Common myeloid progenitor, CD34-positive (primary cell): ENCODE measurements at regions of chr19 and their contacts with region 1.

Region 1: GRCh38 chr19:41449079-41449864 is 6.3 kb downstream of the ERICH4 start:
- DNase-seq: peak; percentile 50 to 68 (median 65)
- H3K4me3 ChIP-seq: peak overlapping the region in 6 of 7 experiments; percentile 13 to 66 (median 42)
- H3K27ac ChIP-seq: no peak overlapping the region
- H3K4me1 ChIP-seq: peaks cover 3 to 13% (median 5%) of the 10 kb centered on the region in 4 experiments
- H3K27me3 ChIP-seq: peaks cover 0 to 5% (median 0%) of the 10 kb centered on the region in 5 experiments

Region 2: DNA sequence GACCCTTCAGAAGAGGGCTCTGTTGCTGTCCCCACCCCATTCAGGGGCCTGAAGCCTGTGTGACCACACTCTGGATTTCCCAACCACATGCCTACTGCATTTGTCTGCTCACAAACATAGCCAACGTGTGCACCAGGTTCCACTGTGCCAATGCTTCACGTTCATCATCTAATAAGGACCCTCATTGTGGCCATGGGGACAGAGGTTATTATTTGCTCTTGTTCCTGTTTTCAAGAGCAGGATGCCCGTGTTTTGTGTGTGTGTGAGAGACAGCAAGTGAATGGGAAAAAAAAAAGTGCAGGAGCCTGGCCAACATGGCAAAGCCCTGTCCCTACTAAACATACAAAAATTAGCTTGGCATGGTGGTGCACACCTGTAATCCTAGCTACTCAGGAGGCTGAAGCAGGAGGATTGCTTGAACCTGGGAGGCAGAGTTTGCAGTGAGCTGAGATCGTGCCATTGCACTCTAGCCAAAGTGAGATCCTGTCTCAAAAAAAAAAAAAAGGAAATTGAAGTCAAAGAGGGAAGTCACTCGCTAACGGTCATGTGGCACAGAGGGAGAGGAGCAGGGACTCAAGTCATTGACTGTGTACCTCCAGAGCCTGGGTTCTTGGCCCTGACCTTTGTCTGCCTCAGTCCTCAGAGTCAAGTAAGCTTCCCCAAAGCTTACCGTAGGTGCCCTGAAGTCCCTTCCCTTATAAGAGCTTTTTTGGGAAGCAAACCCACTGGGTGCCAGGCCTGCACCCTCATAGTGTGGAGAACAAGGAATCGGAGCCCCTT is 29.0 kb before region 1 on chr19:
- CTCF ChIA-PET with region 1: no interaction called
- POLR2A ChIA-PET with region 1: no interaction called
- DNase-seq: peak; percentile 54 to 77 (median 74)
- H3K4me3 ChIP-seq: peak overlapping the region in 3 of 7 experiments; percentile 14 to 52 (median 41)
- H3K27ac ChIP-seq: peak overlapping the region; percentile 51 to 69
- H3K4me1 ChIP-seq: peaks cover 5 to 40% (median 34%) of the 10 kb centered on the region in 4 experiments
- H3K27me3 ChIP-seq: no peaks in the 10 kb centered on the region

Region 3: DNA sequence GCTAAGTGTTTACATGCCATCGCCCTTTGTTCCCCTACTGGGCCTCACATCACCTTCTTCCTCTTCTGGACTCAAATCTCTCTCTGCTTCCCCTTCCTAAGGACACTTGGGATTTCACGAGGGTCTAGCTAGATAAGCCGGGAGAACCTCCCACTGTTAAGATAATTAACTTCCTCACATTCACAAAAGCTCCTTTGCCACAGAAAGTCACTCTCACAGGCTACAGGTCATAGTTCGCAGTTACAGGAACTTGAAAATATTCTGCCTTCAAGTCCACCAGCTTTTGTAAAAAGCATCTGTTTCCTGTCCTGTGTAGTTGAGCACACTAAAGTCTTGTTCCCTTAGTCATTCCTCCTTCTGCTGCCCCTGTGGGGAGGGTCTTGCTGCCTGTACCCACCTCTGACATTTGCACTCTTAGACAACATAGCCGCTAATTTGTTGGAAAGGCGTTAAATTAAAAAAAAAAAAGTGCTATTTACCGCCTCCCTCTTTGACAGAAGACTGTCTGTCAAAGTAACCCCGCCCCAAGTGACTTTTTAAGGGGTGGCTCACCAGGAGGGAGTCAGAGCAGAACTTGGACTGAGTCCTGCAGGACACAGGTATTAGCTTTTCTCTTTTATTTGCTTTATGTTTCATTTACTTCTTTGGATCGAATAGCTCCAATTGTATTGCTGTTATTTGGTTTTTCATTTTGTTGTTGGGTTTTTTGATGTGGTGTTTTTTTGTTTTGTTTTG is 99.8 kb after region 1 on chr19:
- CTCF ChIA-PET with region 1: interaction called, 13 read pairs
- POLR2A ChIA-PET with region 1: no interaction called
- DNase-seq: peak; percentile 86 to 99 (median 97)
- H3K4me3 ChIP-seq: peak overlapping the region in 6 of 7 experiments; percentile 67 to 91 (median 76)
- H3K27ac ChIP-seq: peak overlapping the region; percentile 68 to 82
- H3K4me1 ChIP-seq: peaks cover 49 to 88% (median 77%) of the 10 kb centered on the region in 4 experiments
- H3K27me3 ChIP-seq: no peaks in the 10 kb centered on the region

Region 4: DNA sequence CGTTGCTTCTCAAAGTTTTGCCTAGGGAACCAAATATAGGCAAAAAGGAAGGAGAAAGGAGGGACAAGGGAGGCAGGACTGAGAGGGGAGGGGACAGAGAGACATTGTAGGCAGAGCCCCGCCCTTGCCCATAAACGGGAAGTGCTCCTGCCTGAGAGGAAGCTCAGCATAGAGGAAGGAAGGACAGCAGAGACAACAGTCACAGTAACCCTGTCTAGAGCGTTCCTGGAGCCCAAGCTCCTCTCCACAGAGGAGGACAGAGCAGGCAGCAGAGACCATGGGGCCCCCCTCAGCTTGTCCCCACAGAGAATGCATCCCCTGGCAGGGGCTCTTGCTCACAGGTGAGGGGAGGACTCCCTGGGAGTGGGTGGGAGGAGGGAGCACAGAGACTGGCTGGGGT is 126.7 kb after region 1 on chr19 and contains the start of gene CEACAM21:
- CTCF ChIA-PET with region 1: interaction called, 113 read pairs
- POLR2A ChIA-PET with region 1: no interaction called
- DNase-seq: peak; percentile 59 to 86 (median 80)
- H3K4me3 ChIP-seq: peak within 1 kb of the TSS in 5 of 7 experiments; percentile 8 to 60 (median 22)
- H3K27ac ChIP-seq: peak within 1 kb of the TSS; percentile 22 to 39
- H3K4me1 ChIP-seq: peaks cover 1 to 13% (median 12%) of the 10 kb centered on the region in 4 experiments
- H3K27me3 ChIP-seq: no peaks in the 10 kb centered on the region

Region 5: DNA sequence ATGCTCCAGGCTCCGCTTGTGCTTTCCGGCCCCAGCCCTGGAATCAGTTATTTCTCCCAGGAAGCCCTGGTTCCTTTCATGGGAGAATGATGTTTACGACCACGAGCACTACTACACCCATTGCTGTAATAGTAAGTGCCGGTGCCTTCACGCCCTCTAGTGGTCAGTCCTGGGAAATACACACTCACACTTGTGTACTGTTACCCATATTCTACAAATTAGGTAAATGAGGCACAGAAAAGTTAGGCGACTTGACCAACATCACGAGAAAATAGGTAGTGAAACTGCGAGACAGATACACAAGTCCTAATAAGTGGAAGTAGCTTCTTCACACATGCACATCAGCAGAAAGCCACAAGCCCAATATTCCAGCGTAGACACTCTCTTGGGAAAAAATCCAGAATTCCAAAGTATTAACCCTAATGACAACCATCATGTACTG is 148.3 kb after region 1 on chr19:
- CTCF ChIA-PET with region 1: interaction called, 22 read pairs
- POLR2A ChIA-PET with region 1: no interaction called
- DNase-seq: peak; percentile 74 to 84 (median 79)
- H3K4me3 ChIP-seq: no peak overlapping the region
- H3K27ac ChIP-seq: no peak overlapping the region
- H3K4me1 ChIP-seq: peaks cover 0 to 4% (median 2%) of the 10 kb centered on the region in 4 experiments
- H3K27me3 ChIP-seq: peaks cover 0 to 4% (median 0%) of the 10 kb centered on the region in 5 experiments